Activated naive CD4-positive, alpha-beta T cell treated with anti-CD3 and anti-CD28 coated beads for 36 hours (primary cell): ENCODE measurements at regions of chr1 and their contacts with region 1.

Region 1: GRCh38 chr1:6359216-6360116 is 34.1 kb downstream of the ACOT7 start:
- DNase-seq: peak; percentile 59
- H3K4me3 Mint-ChIP-seq: peak overlapping the region; percentile 39
- H3K27ac Mint-ChIP-seq: peak overlapping the region; percentile 72
- H3K4me1 Mint-ChIP-seq: peaks cover 42% of the 10 kb centered on the region
- H3K27me3 Mint-ChIP-seq: no peaks in the 10 kb centered on the region

Region 2: DNA sequence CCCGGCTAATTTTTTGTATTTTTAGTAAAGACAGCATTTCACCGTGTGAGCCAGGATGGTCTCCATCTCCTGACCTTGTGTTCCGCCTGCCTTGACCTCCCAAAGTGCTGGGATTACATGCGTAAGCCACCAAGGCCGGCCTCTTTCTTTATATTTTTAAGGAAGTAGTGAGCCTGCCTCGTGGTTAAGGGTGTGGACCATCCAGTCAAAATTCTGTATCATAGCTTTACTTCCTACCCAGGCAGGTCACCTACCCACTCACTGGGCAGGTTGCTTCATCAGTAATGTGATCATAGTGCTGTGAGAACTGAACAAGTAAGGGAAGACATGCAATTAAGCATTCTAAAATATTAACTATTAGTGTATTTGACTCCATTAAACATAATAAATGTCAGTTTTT is 42.2 kb after region 1 on chr1:
- CTCF ChIA-PET with region 1: interaction called, 31 read pairs
- intact Hi-C with region 1: loop called (anchors 1 kb)
- DNase-seq: no peak
- H3K4me3 Mint-ChIP-seq: no peak overlapping the region
- H3K27ac Mint-ChIP-seq: no peak overlapping the region
- H3K4me1 Mint-ChIP-seq: peaks cover 3% of the 10 kb centered on the region
- H3K27me3 Mint-ChIP-seq: no peaks in the 10 kb centered on the region